ENCODE measurements at regions of chr15 and their contacts with region 1.

Region 1: GRCh38 chr15:47961401-47962090 is 159.2 kb upstream of the SLC24A5 start:
- DNase-seq: no peak
- ATAC-seq: no peak
- H3K4me3 ChIP-seq: no peak overlapping the region
- H3K27ac ChIP-seq: no peak overlapping the region
- H3K4me1 ChIP-seq: peaks cover 0 to 7% (median 0%) of the 10 kb centered on the region in 9 donors
- H3K27me3 ChIP-seq: peaks cover 0 to 4% (median 0%) of the 10 kb centered on the region in 7 donors
- CTCF ChIP-seq: no peak

Region 2: DNA sequence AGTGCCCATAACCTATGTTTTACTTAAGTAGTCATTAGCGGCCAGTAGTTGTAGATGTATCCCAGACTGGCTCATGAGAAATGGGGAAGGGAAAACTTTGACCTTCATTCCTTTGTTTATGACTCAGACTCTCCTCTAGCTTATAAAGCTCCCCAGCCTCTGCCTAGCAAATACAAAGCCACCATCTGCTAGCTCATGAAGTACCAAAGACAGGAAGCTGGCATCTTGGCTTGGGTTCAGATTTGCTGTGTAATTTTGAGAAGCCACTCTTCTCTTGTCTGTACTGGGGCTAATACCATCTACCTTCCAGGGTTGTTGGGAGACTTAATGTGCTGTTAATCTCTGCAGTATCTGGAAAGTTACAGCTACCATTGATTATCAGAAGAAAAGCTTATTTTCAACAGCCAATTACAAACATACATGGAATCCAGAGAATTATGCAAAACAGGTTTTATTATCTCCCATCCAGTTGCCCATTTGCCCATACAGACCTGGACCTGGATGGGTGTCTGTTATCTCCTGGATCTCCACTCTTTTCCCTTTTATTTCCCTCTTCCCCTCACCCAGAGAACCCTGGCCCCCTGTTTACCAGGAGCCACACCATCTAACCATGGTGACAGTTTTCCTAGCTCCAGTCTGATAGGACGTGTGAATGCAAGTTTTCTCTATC is 90.5 kb before region 1 on chr15:
- intact Hi-C with region 1: no loop called
- DNase-seq: no peak
- ATAC-seq: peak in 3 of 8 donors; percentile 19 to 59 (median 47)
- H3K4me3 ChIP-seq: no peak overlapping the region
- H3K27ac ChIP-seq: no peak overlapping the region
- H3K4me1 ChIP-seq: peaks cover 0 to 32% (median 12%) of the 10 kb centered on the region in 9 donors
- H3K27me3 ChIP-seq: no peaks in the 10 kb centered on the region
- CTCF ChIP-seq: no peak

Region 3: DNA sequence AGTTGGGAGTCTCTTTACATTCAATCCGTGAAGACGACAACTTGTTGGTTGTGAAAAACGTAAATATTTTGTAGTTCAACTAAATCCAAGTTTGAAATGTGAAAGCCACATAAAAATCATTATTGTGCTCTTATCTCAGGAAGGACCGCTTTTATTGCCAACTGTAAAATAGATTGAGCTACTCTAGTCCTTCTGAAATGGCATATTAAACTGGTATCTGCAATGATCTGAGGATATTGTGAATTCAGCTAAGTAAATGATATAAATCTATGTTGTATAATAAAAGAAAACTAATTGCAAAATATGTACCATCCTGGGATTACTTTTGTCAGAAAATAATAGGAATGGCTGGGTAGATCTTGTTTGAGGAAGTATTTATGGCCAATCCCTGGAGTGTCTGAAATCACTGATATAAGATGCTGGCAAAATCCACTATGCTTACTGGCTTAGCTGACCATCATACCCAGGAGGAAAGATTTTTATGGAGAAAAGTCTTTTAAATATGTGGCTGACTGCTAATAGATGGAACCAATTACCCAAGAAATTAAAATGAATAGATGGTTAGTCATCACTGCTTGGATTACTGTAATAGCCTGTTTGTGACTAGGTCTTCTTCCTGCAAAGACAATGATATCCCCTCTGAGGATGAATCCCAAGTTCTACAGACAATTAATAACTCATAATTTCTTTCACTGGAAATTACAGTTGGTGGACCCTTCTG is 52.4 kb before region 1 on chr15:
- intact Hi-C with region 1: loop called in 1 of 10 experiments (anchors 10 kb)
- DNase-seq: no peak
- ATAC-seq: no peak
- H3K4me3 ChIP-seq: no peak overlapping the region
- H3K27ac ChIP-seq: no peak overlapping the region
- H3K4me1 ChIP-seq: no peaks in the 10 kb centered on the region
- H3K27me3 ChIP-seq: no peaks in the 10 kb centered on the region
- CTCF ChIP-seq: no peak

Region 4: GRCh38 chr15:47944637-47945288 is 16.8 kb before region 1 on chr15:
- intact Hi-C with region 1: loop called in 1 of 10 experiments (anchors 2 kb)
- DNase-seq: no peak
- ATAC-seq: no peak
- H3K4me3 ChIP-seq: no peak overlapping the region
- H3K27ac ChIP-seq: no peak overlapping the region
- H3K4me1 ChIP-seq: peaks cover 0 to 9% (median 3%) of the 10 kb centered on the region in 9 donors
- H3K27me3 ChIP-seq: no peaks in the 10 kb centered on the region
- CTCF ChIP-seq: peak in 1 of 9 donors; percentile 17

Measured in heart right ventricle (tissue), 16 donors.